BJ (cell line): ENCODE measurements at regions of chr9 and their contacts with region 1.

Region 1: DNA sequence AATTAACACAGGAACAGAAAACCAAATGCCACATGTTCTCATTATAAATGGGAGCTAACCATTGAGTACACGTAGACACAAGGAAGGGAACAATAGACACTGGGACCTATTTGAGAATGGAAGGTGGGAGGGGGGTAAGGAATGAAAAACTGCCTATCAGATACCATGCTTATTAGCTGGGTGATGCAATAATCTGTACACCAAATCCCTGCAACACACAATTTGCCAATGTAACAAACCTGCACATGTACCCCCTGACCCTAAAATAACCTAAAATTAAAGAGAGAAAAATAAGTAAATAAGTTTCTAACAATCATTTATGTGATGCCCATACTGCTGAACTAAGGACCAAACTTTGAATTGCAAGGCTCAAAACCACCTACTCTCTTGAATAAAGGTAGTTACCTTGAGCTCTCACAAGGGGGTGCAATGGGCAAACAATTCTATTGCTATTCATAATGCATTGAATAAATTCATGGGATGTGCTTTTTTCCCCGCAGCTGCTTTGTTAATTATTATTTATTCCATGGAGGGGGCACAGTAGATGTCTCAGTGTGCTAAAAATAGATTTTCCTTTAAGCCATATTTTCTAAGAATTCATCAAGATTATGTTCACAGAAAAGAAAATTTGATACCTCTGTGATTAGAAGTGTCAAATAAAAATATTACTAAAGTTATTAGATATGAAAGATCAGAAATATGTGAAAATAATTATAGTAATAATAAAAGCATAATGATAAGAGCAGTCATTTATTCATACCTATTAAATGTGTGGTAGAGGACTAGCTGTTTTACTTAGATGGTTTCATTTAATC is 76.2 kb upstream of the PTPN3 start:
- DNase-seq: peak; percentile 9
- H3K4me3 ChIP-seq: no peak overlapping the region
- H3K27me3 ChIP-seq: peaks cover 4% of the 10 kb centered on the region
- CTCF ChIP-seq: peak; percentile 64

Region 2: GRCh38 chr9:109441296-109441695 is 133.0 kb before region 1 on chr9:
- CTCF ChIA-PET with region 1: no interaction called
- POLR2A ChIA-PET with region 1: no interaction called
- DNase-seq: no peak
- H3K4me3 ChIP-seq: no peak overlapping the region
- H3K27me3 ChIP-seq: no peaks in the 10 kb centered on the region
- CTCF ChIP-seq: peak; percentile 22; the same call in 1 of the 2 replicates

Region 3: GRCh38 chr9:109640580-109641371 is 66.5 kb after region 1 on chr9:
- CTCF ChIA-PET with region 1: interaction called, 4 read pairs
- POLR2A ChIA-PET with region 1: interaction called, 10 read pairs
- DNase-seq: no peak
- H3K4me3 ChIP-seq: peak overlapping the region; percentile 30
- H3K27me3 ChIP-seq: peaks cover 38% of the 10 kb centered on the region
- CTCF ChIP-seq: no peak

Region 4: DNA sequence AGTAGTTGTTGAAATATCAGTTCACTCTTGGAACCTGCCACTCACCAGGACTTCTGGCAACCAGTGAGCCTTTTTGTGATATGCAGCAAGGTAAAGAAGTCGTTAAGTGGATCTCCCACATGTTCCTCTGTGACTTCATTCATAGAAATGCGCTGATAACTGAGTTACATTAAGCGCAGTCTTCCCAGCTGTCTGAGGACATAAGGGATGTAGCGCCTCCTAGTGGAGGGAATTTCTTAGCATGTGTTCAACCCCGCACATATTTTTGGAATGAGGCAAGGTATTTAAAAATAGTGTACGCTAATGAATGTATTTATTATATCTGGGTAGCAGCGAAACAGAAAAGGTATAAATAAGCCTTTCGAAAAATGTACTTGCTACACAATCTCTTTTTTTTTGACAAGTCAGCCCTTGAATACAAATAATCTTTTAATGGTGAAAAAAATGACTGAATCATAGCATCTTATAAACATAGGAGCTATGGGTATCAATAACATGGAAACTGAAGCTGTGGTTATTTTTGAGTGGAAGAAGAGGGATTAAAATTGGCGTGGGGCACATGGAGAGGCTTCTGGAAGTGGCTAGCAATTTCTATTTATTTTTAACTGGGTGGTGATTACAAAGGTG is 243.7 kb after region 1 on chr9:
- CTCF ChIA-PET with region 1: interaction called, 62 read pairs
- POLR2A ChIA-PET with region 1: no interaction called
- DNase-seq: peak; percentile 88
- H3K4me3 ChIP-seq: no peak overlapping the region
- H3K27me3 ChIP-seq: no peaks in the 10 kb centered on the region
- CTCF ChIP-seq: peak; percentile 72